Ascending aorta (tissue), 2 donors: ENCODE measurements at regions of chr19 and their contacts with region 1.

Region 1: GRCh38 chr19:7159105-7159933 is 89.8 kb downstream of the ZNF557 start:
- DNase-seq: peak; percentile 89 to 94
- H3K4me3 ChIP-seq: no peak overlapping the region
- H3K27ac ChIP-seq: peak overlapping the region; percentile 87 to 89
- H3K4me1 ChIP-seq: peaks cover 0 to 10% of the 10 kb centered on the region in 2 donors
- H3K27me3 ChIP-seq: no peaks in the 10 kb centered on the region
- CTCF ChIP-seq: no peak

Region 2: GRCh38 chr19:6935069-6935468 is 224.2 kb before region 1 on chr19:
- intact Hi-C with region 1: no loop called
- DNase-seq: no peak
- H3K4me3 ChIP-seq: no peak overlapping the region
- H3K27ac ChIP-seq: no peak overlapping the region
- H3K4me1 ChIP-seq: no peaks in the 10 kb centered on the region
- H3K27me3 ChIP-seq: no peaks in the 10 kb centered on the region
- CTCF ChIP-seq: no peak

Region 3: DNA sequence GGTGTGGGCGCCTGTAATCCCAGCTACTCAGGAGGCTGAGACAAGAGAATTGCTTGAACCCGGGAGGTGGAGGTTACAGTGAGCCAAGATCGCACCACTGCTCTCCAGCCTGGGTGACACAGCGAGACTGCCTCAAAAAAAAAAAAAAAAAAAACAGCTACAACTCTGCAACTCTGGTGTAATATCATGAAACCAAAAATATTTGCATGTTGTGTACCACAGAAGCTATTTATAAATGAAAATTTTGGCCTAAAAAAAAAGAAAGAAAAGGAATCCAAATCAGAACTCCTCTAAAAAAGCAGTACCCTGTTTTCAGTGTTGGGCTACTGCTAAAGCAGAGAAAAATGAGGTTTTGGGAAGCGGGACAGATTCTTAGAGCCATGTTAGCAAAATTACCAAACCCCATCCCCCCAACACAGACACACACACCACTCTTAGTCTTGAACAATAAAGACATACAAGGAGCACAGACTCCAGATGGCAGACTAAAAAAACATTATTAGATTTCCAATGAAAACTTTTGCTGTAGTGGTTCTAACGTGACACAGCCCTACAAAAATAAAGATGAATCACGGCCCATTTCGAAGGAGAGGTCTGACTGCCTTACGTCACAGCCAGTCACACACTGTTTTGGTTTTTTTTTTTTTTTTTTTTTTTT is 83.4 kb after region 1 on chr19:
- intact Hi-C with region 1: loop called (anchors 5 kb)
- DNase-seq: peak in 1 of 2 donors; percentile 79
- H3K4me3 ChIP-seq: peak overlapping the region in 1 of 2 donors; percentile 6
- H3K27ac ChIP-seq: peak overlapping the region; percentile 80 to 92
- H3K4me1 ChIP-seq: peaks cover 0 to 35% of the 10 kb centered on the region in 2 donors
- H3K27me3 ChIP-seq: no peaks in the 10 kb centered on the region
- CTCF ChIP-seq: no peak